A549 (cell line): ENCODE measurements at regions of chr11 and their contacts with region 1.

Region 1: DNA sequence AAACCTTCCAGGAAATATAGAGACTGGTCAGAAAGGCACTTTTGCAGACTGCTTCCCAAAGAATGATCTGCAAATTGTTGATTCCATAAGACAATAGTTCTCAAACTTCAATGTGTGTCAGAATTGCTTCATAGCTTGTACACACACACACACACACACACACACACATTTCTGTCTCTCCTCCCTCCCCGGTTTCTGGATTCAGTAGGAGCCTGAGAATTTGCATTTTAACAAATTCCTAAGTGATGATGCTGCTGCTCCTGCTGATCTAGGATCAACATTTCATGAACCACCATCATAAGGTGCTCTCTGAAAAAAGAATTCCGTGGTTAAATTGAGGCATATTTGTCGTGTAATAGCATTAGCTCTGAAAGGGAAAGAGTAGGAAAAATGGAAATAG is 35.3 kb upstream of the FZD4 start:
- DNase-seq: peak in 1 of 2 experiments; percentile 22
- ATAC-seq: no peak
- H3K4me3 ChIP-seq: no peak overlapping the region
- H3K27ac ChIP-seq: no peak overlapping the region
- H3K4me1 ChIP-seq: peaks cover 4% of the 10 kb centered on the region; the same call in 1 of the 3 replicates
- CTCF ChIP-seq: no peak
- EP300 ChIP-seq: no peak
- POLR2A ChIP-seq: no peak
- RAD21 ChIP-seq: no peak

Region 2: DNA sequence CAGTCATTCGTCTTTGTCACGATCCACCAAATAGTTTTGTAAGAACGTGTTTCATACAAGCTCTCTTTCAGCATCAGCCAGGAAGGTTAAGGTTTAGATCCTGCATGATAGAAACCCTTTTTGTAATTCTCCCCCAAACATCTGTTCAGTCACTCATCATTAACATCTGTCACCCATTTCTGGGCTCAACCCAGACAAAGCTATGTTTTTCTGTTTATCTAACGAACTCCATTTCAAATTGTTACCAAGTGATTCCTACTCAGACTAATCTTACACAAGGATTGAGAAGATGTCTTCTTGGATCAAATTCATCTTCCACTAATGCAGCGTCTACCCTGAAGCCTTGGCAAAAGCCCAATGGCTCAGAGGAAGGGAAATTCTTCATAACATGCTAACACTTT is 94.1 kb before region 1 on chr11:
- CTCF ChIA-PET with region 1: no interaction called
- POLR2A ChIA-PET with region 1: no interaction called
- DNase-seq: no peak
- ATAC-seq: no peak
- H3K4me3 ChIP-seq: no peak overlapping the region
- H3K27ac ChIP-seq: no peak overlapping the region
- H3K4me1 ChIP-seq: no peaks in the 10 kb centered on the region
- CTCF ChIP-seq: no peak
- EP300 ChIP-seq: no peak
- POLR2A ChIP-seq: no peak
- RAD21 ChIP-seq: no peak

Region 3: DNA sequence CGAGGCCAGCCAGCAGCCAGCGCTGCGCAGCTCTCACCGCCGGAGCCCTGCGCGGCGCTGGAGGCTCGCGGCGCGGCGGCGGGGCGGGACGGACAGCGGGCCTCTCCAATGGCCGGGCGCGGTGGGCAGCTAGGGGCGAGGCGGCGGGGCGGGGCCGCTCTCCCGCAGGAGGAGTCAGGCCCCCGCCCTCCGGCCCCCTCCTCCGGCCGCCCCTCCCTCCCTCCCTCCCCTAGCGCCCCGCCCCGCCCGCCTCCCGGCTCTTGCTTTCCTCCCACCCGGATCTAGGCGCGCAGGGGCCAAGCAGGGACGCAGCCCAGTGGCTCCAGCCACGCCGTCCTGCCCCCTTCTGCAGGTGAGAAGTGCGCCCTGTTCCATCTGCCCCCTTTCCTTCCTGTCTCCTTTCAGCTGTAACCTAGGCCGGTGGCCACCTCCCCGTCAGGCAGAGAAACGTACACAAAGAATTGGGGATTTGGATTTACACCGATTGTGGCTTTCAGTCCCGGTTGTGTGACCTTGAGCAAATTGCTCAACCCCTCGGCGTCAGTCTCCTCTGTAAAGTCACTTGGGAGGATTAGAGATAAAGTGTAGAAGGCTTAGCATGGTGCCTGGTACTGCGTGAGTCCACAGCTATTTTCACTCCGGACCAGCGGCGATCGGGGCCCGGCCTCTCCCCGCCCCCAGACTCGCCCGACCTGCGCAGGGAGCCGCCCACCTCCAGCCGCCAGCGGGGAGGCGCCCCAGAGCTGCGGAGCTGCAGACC is 35.0 kb before region 1 on chr11 and contains the start of gene FZD4:
- CTCF ChIA-PET with region 1: interaction called, 11 read pairs
- POLR2A ChIA-PET with region 1: interaction called, 3 read pairs
- DNase-seq: peak; percentile 85 to 88
- ATAC-seq: peak; percentile 90 to 98
- H3K4me3 ChIP-seq: peak within 1 kb of the TSS; percentile 82
- H3K27ac ChIP-seq: peak within 1 kb of the TSS; percentile 78 to 92
- H3K4me1 ChIP-seq: peaks cover 9% of the 10 kb centered on the region; the same call in 1 of the 3 replicates
- CTCF ChIP-seq: peak; percentile 38; the same call in 2 of the 3 replicates
- EP300 ChIP-seq: no peak
- POLR2A ChIP-seq: no peak; the same call in 1 of the 2 replicates
- RAD21 ChIP-seq: peak; percentile 37 to 42; a peak in 3 of 5 replicates
- polyA plus RNA-seq, gene FZD4: 0.90 and 1.3 TPM in 2 replicates

Region 4: DNA sequence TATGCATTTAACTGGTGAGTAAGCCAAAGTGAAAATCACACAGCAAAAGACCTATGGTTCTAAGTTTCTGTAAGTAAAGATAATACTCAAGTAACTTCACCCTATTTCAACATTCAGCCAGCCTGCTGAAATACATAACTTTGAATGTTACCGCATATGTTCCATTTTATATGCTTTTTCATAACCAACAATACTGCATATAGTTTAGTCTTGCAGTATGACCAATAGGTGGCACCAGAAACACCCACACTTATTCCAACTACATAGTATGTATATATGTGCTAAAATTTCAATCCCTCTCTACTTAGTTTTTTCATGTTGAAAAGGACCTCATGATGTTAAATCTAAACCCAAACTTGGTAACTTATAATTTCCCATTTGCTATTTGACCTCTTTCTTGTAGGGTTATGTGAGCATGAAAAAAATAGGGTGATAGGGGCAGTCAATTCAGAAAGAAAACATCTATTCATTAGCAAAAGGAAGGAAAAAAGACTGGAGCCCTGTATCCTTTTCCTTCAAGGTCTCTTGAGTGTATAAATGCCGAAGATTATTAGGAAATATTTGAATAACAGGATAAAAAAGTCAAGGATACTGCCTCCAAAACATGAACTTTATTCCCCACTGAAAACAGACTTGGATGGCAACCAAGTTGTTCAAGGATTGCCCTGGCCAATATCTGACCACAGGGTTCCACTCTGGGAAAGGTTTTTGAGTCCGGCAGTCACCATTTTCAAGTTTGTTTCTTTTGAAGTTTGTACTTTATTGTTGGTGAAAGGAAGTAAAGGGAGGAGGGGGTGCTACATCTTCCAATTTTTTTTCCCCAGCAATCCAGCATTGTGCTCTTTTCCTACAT is 11.5 kb before region 1 on chr11:
- CTCF ChIA-PET with region 1: interaction called, 15 read pairs
- POLR2A ChIA-PET with region 1: no interaction called
- DNase-seq: peak; percentile 38 to 56
- ATAC-seq: peak; percentile 88 to 95; a peak in 5 of 6 replicates
- H3K4me3 ChIP-seq: no peak overlapping the region
- H3K27ac ChIP-seq: no peak overlapping the region
- H3K4me1 ChIP-seq: no peaks in the 10 kb centered on the region; the same call in 2 of the 3 replicates
- CTCF ChIP-seq: peak; percentile 69
- EP300 ChIP-seq: no peak
- POLR2A ChIP-seq: no peak
- RAD21 ChIP-seq: peak; percentile 57 to 67; a peak in 4 of 5 replicates

Region 5: DNA sequence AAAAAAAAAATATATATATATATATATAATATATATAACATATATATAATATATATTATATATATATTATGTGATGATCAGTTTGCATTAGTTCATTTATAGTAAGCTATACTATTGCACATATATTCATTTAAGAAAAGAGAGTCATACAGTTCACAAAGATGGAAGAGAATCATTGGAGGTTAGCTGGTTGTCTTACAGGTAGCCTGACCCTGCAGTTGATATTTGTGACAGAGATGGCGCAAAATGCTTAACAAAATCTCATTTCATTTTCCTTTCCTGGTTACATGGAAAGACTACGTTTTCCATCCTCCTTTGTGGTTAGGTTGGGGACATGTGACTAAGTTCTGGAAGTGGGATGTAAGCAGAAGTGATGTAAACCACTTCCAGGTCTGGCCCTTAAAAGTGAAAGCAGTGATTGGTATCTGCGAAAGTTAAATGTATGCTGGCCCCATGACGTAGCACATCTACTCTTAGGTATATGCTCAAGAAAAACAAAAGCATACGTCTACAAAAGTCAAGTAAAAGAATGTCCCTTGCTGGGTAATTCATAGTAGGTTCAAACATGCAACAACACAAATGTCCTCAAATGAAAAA is 40.0 kb after region 1 on chr11:
- CTCF ChIA-PET with region 1: interaction called, 13 read pairs
- POLR2A ChIA-PET with region 1: no interaction called
- DNase-seq: peak in 1 of 2 experiments; percentile 6
- ATAC-seq: no peak
- H3K4me3 ChIP-seq: no peak overlapping the region
- H3K27ac ChIP-seq: no peak overlapping the region
- H3K4me1 ChIP-seq: 0 out of 3 replicates have a peak, but pooled peaks cover 5% of the 10 kb centered on the region
- CTCF ChIP-seq: no peak
- EP300 ChIP-seq: no peak
- POLR2A ChIP-seq: no peak
- RAD21 ChIP-seq: no peak

Region 6: GRCh38 chr11:87043894-87044293 is 53.4 kb after region 1 on chr11:
- CTCF ChIA-PET with region 1: no interaction called
- POLR2A ChIA-PET with region 1: no interaction called
- DNase-seq: no peak
- ATAC-seq: no peak
- H3K4me3 ChIP-seq: no peak overlapping the region
- H3K27ac ChIP-seq: no peak overlapping the region
- H3K4me1 ChIP-seq: peaks cover 14% of the 10 kb centered on the region; the same call in 2 of the 3 replicates
- CTCF ChIP-seq: no peak
- EP300 ChIP-seq: no peak
- POLR2A ChIP-seq: no peak
- RAD21 ChIP-seq: no peak